Naive thymus-derived CD4-positive, alpha-beta T cell (primary cell): ENCODE measurements at regions of chr12 and their contacts with region 1.

Region 1: DNA sequence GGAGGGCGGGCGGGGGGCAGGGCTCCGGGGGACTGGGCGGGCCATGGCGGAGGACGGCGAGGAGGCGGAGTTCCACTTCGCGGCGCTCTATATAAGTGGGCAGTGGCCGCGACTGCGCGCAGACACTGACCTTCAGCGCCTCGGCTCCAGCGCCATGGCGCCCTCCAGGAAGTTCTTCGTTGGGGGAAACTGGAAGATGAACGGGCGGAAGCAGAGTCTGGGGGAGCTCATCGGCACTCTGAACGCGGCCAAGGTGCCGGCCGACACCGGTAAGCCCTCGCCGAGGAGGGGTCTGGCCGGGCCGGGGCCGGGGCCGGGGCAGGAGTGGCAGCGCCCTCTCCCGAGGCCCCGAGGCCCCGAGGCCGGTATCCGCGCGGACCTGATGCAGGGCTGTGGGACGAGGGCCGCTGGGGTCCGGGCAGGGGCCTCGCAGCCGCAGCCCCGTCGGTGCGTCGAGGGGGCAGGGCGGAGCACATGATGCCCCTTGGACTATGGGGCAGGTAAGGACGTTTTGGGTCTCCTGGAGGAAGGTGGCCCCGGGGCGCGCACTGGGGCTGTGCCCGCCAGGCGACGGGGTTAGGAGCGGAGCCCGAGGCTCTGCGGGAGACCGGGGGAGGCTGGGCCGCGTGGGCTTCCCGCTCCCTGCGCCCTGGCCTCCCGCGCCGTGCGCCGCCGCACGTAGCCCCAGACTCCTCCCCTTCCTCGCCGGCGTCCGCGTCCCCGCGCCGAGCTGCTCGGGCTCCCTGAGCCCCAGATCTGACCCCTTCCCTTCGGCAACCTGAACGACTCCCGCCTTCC is at the start of gene TPI1:
- DNase-seq: peak; percentile 40 to 87 (median 52)
- ATAC-seq: peak; percentile 88
- H3K4me3 ChIP-seq: peak within 1 kb of the TSS; percentile 61
- H3K4me3 Mint-ChIP-seq: peak within 1 kb of the TSS; percentile 87 to 93 (median 91)
- H3K27ac ChIP-seq: peak within 1 kb of the TSS; percentile 82
- H3K27ac Mint-ChIP-seq: peak within 1 kb of the TSS; percentile 76 to 95 (median 87)
- H3K4me1 ChIP-seq: peaks cover 38 to 39% of the 10 kb centered on the region in 2 donors
- H3K4me1 Mint-ChIP-seq: peaks cover 34 to 55% (median 44%) of the 10 kb centered on the region in 7 donors
- H3K27me3 ChIP-seq: no peaks in the 10 kb centered on the region
- H3K27me3 Mint-ChIP-seq: no peaks in the 10 kb centered on the region
- total RNA-seq, gene TPI1: 89.7 to 1,293 (median 134) TPM

Region 2: DNA sequence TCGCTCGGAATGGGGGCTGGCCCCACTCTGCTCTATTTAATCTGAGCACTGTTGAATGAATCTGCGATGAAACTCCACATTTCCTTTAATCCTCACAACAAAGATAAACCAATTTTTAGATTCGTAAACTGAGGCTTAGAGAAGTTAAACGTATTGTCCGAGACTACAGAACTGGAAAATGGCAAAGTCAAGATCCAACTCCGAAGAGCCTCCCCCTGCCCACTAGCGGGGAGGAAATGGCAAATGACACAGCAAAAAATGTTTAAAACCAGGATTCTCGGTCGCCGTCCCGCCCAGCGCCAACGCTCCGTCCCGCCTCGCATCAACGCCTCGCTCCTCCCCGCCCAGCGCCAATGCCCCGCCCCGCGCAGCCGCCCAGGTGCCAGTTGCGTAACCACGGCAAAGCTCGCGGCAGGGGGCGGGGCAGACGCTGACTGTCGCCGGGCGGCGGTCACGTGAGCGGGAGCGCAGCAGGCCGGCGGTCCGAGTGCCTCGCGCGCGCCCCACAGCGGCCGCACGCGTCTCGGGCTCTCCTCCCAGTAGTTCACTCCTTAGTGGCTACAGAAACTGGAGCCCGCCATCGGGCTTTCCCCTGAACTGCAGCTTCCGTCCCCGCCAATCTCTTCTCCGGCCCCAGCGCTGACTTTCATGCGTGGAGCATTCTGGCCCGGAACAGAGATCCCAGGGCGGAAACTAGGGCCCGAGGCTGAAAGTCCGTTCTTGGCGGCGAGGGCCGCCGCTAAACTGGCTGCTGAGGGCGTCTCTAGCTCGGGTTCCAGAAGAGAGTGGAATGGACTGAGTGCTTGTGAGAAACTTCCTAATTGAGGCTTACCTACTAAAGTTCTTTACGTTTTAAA is 23.4 kb after region 1 on chr12:
- CTCF ChIA-PET with region 1: interaction called, 21 read pairs
- POLR2A ChIA-PET with region 1: interaction called, 70 read pairs
- intact Hi-C with region 1: no loop called
- DNase-seq: peak; percentile 95 to 100 (median 97)
- ATAC-seq: peak; percentile 96
- H3K4me3 ChIP-seq: peak overlapping the region; percentile 93
- H3K4me3 Mint-ChIP-seq: peak overlapping the region; percentile 78 to 86 (median 84)
- H3K27ac ChIP-seq: peak overlapping the region; percentile 86
- H3K27ac Mint-ChIP-seq: peak overlapping the region; percentile 82 to 94 (median 90)
- H3K4me1 ChIP-seq: peaks cover 6 to 10% of the 10 kb centered on the region in 2 donors
- H3K4me1 Mint-ChIP-seq: peaks cover 0 to 31% (median 11%) of the 10 kb centered on the region in 7 donors
- H3K27me3 ChIP-seq: no peaks in the 10 kb centered on the region
- H3K27me3 Mint-ChIP-seq: no peaks in the 10 kb centered on the region

Region 3: GRCh38 chr12:6937481-6938297 is 70.1 kb after region 1 on chr12:
- CTCF ChIA-PET with region 1: interaction called, 21 read pairs
- POLR2A ChIA-PET with region 1: interaction called, 52 read pairs
- intact Hi-C with region 1: loop called in 1 of 2 experiments (anchors 1 kb)
- DNase-seq: peak; percentile 81 to 96 (median 93)
- ATAC-seq: peak; percentile 97
- H3K4me3 ChIP-seq: peak overlapping the region; percentile 90
- H3K4me3 Mint-ChIP-seq: peak overlapping the region; percentile 75 to 88 (median 84)
- H3K27ac ChIP-seq: peak overlapping the region; percentile 92
- H3K27ac Mint-ChIP-seq: peak overlapping the region; percentile 91 to 99 (median 96)
- H3K4me1 ChIP-seq: peaks cover 5 to 29% of the 10 kb centered on the region in 2 donors
- H3K4me1 Mint-ChIP-seq: peaks cover 41 to 67% (median 51%) of the 10 kb centered on the region in 7 donors
- H3K27me3 ChIP-seq: no peaks in the 10 kb centered on the region
- H3K27me3 Mint-ChIP-seq: no peaks in the 10 kb centered on the region

Region 4: DNA sequence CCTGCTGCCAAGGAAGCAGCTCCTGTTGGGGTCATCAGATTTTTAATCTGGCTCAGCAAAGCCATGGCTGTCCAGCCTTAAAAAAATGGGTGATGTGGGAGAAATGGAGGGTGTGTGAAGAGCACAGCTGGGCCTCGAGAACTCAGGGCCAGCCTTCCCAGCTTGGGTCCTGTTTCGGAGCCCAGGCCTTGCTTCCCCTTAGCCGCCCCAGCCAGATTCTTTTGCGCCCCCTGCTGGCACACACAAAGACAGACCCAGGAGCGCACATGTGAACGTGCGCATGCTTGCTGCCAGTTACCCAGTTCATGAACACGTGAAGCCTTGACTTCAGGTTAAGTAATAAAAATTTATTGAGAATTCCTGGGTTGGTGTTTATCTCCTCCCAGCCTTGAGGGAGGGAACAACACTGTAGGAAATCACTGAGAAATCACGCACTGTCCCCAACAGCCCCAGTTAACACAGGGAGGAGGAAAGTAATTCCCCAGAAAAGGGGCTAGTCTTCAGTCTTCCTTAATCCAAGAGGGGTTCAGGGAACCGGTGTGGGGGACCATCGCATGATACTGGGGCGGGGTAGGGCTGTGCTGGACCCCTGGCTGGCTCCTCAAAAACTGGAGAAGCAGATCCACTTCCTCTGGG is 97.5 kb after region 1 on chr12:
- CTCF ChIA-PET with region 1: interaction called, 14 read pairs
- POLR2A ChIA-PET with region 1: interaction called, 11 read pairs
- intact Hi-C with region 1: loop called in 1 of 2 experiments (anchors 1 kb)
- DNase-seq: peak; percentile 77 to 89 (median 85)
- ATAC-seq: peak; percentile 69
- H3K4me3 ChIP-seq: no peak overlapping the region
- H3K4me3 Mint-ChIP-seq: peak overlapping the region in 3 of 10 donors; percentile 9 to 23 (median 17)
- H3K27ac ChIP-seq: peak overlapping the region; percentile 68
- H3K27ac Mint-ChIP-seq: peak overlapping the region; percentile 75 to 95 (median 87)
- H3K4me1 ChIP-seq: peaks cover 45 to 60% of the 10 kb centered on the region in 2 donors
- H3K4me1 Mint-ChIP-seq: peaks cover 33 to 59% (median 56%) of the 10 kb centered on the region in 7 donors
- H3K27me3 ChIP-seq: no peaks in the 10 kb centered on the region
- H3K27me3 Mint-ChIP-seq: no peaks in the 10 kb centered on the region

Region 5: DNA sequence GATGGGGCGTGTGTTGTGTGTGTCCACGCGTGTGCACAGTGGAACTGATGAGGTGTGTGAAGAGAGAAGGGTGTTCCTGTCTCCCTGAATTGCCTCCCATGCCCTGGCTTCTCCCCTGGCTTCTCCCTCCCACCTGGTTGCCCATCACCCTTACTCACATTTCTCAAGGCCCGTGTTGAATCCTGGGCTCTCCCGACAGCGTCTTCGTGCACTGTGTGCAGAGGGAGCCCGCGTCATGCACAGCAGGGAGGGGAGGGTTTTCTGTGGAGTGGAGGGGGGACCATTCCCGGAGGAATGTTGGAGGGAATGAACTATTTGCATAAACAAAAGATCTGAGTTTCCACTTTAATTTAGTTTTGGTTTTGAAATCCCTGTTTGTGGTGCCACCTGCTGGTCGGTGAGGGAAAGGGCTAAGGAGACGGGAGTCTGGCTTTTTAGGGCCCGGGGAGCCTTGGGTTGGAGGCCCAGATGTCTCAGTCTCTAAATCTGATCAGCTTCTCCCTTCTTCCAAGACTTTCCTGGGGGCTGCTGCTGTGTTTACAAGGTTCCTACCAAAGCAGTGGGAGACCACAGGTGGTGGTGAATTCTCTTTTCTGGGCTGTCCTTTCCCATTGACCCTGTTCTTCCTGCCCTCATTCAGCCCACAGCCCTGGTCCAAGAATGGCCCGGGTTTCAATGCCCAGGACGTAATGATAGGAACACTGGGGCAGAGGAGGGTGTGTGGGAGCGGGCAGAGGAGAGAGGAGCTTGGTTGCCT is 224.8 kb after region 1 on chr12 and contains the start of gene C1R:
- CTCF ChIA-PET with region 1: interaction called, 4 read pairs
- POLR2A ChIA-PET with region 1: no interaction called
- intact Hi-C with region 1: loop called (anchors 1 to 5 kb)
- DNase-seq: peak; percentile 46 to 71 (median 64)
- ATAC-seq: peak; percentile 81
- H3K4me3 ChIP-seq: peak within 1 kb of the TSS; percentile 66
- H3K4me3 Mint-ChIP-seq: peak within 1 kb of the TSS; percentile 76 to 91 (median 86)
- H3K27ac ChIP-seq: peak within 1 kb of the TSS; percentile 44
- H3K27ac Mint-ChIP-seq: peak within 1 kb of the TSS in 8 of 9 donors; percentile 65 to 94 (median 78)
- H3K4me1 ChIP-seq: peaks cover 7 to 8% of the 10 kb centered on the region in 2 donors
- H3K4me1 Mint-ChIP-seq: peaks cover 0 to 14% (median 9%) of the 10 kb centered on the region in 7 donors
- H3K27me3 ChIP-seq: no peaks in the 10 kb centered on the region
- H3K27me3 Mint-ChIP-seq: no peaks in the 10 kb centered on the region
- total RNA-seq, gene C1R: 1.6 to 7.2 (median 4.8) TPM

Region 6: GRCh38 chr12:7142056-7142644 is 274.5 kb after region 1 on chr12:
- CTCF ChIA-PET with region 1: no interaction called
- POLR2A ChIA-PET with region 1: no interaction called
- intact Hi-C with region 1: loop called in 1 of 2 experiments (anchors 1 kb)
- DNase-seq: peak in 8 of 9 donors; percentile 33 to 60 (median 56)
- ATAC-seq: peak; percentile 83
- H3K4me3 ChIP-seq: no peak overlapping the region
- H3K4me3 Mint-ChIP-seq: no peak overlapping the region
- H3K27ac ChIP-seq: no peak overlapping the region
- H3K27ac Mint-ChIP-seq: no peak overlapping the region
- H3K4me1 ChIP-seq: peaks cover 0 to 3% of the 10 kb centered on the region in 2 donors
- H3K4me1 Mint-ChIP-seq: peaks cover 0 to 19% (median 5%) of the 10 kb centered on the region in 7 donors
- H3K27me3 ChIP-seq: no peaks in the 10 kb centered on the region
- H3K27me3 Mint-ChIP-seq: no peaks in the 10 kb centered on the region

Region 7: DNA sequence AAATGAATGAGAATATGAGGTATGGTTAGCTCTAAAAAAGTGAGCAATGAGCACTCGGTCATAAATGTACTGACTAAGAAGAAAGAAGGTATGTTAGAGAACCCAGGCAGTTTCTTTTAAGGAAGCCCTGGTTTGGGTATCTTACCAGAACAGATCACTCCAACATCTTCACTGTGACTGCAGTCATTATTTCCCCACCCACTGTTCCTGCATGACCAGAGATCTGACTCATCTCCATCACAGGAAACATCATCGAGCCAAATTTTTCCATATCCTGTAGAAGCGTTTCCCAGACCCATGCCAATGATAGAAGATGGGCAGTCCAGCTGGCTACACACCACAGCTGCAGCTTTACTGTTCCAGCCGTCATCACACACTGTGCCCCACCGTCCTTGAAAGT is 528.3 kb after region 1 on chr12:
- CTCF ChIA-PET with region 1: no interaction called
- POLR2A ChIA-PET with region 1: no interaction called
- intact Hi-C with region 1: no loop called
- DNase-seq: no peak
- ATAC-seq: no peak
- H3K4me3 ChIP-seq: no peak overlapping the region
- H3K4me3 Mint-ChIP-seq: no peak overlapping the region
- H3K27ac ChIP-seq: no peak overlapping the region
- H3K27ac Mint-ChIP-seq: no peak overlapping the region
- H3K4me1 ChIP-seq: no peaks in the 10 kb centered on the region
- H3K4me1 Mint-ChIP-seq: no peaks in the 10 kb centered on the region
- H3K27me3 ChIP-seq: no peaks in the 10 kb centered on the region
- H3K27me3 Mint-ChIP-seq: peaks cover 6 to 19% (median 17%) of the 10 kb centered on the region in 5 donors